ENCODE measurements at regions of chr1 and their contacts with region 1.

Region 1: GRCh38 chr1:6489799-6490180 is 1.7 kb downstream of the PLEKHG5 start:
- DNase-seq: peak; percentile 75
- ATAC-seq: peak; percentile 75
- H3K4me3 Mint-ChIP-seq: peak overlapping the region; percentile 77
- H3K27ac Mint-ChIP-seq: no peak overlapping the region
- H3K4me1 Mint-ChIP-seq: peaks cover 13% of the 10 kb centered on the region
- H3K27me3 Mint-ChIP-seq: peaks cover 9% of the 10 kb centered on the region
- CTCF ChIP-seq: peak; percentile 67

Region 2: GRCh38 chr1:6624710-6625583 is 135.2 kb after region 1 on chr1 and contains the start of gene THAP3:
- CTCF ChIA-PET with region 1: no interaction called
- POLR2A ChIA-PET with region 1: no interaction called
- intact Hi-C with region 1: loop called (anchors 5 kb)
- DNase-seq: peak; percentile 83
- ATAC-seq: peak; percentile 97
- H3K4me3 Mint-ChIP-seq: peak within 1 kb of the TSS; percentile 86
- H3K27ac Mint-ChIP-seq: peak within 1 kb of the TSS; percentile 71
- H3K4me1 Mint-ChIP-seq: peaks cover 32% of the 10 kb centered on the region
- H3K27me3 Mint-ChIP-seq: no peaks in the 10 kb centered on the region
- CTCF ChIP-seq: no peak
- total RNA-seq, gene THAP3: 16.2 and 21.3 TPM in 2 replicates

Region 3: DNA sequence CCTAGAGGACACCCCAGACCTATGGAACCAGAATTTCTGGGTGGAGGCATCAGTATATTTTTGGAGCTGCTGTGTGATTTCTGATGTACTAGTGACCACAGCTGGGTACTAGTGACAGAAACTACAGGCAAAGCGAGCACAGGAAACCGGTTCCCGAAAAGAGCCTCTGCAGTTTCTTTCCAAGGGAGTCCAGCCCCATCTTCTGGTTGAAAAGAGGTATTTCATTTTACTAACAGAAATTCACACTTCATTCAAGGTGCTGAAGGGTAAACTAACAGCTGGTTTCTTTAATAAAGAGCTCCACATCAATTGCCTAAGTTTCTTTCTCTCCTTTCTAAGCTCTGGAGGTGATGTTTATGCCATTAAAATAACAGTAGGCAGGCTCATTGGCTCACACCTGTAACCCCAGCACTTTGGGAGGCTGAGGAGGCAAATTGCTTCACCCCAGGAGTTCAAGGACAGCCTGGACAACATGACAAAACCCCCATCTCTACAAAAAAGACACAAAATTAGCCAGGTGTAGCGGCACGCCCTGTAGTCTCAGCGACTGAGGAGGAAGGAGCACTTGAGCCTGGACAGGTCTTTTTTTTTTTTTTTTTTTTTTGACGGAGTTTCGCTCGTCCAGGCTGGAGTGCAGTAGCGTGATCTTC is 156.8 kb after region 1 on chr1:
- CTCF ChIA-PET with region 1: interaction called, 16 read pairs
- POLR2A ChIA-PET with region 1: no interaction called
- intact Hi-C with region 1: loop called (anchors 1 kb)
- DNase-seq: no peak
- ATAC-seq: peak; percentile 49
- H3K4me3 Mint-ChIP-seq: no peak overlapping the region
- H3K27ac Mint-ChIP-seq: no peak overlapping the region
- H3K4me1 Mint-ChIP-seq: peaks cover 2% of the 10 kb centered on the region
- H3K27me3 Mint-ChIP-seq: no peaks in the 10 kb centered on the region
- CTCF ChIP-seq: peak; percentile 26

Region 4: GRCh38 chr1:6701437-6702153 is 211.8 kb after region 1 on chr1 and contains the start of gene DNAJC11:
- CTCF ChIA-PET with region 1: no interaction called
- POLR2A ChIA-PET with region 1: no interaction called
- intact Hi-C with region 1: loop called (anchors 1 kb)
- DNase-seq: peak; percentile 99
- ATAC-seq: peak; percentile 95
- H3K4me3 Mint-ChIP-seq: peak within 1 kb of the TSS; percentile 92
- H3K27ac Mint-ChIP-seq: peak within 1 kb of the TSS; percentile 88
- H3K4me1 Mint-ChIP-seq: peaks cover 21% of the 10 kb centered on the region
- H3K27me3 Mint-ChIP-seq: no peaks in the 10 kb centered on the region
- CTCF ChIP-seq: peak; percentile 28
- total RNA-seq, gene DNAJC11: 57.0 and 65.6 TPM in 2 replicates

Region 5: GRCh38 chr1:7218210-7218832 is 728.5 kb after region 1 on chr1:
- CTCF ChIA-PET with region 1: no interaction called
- POLR2A ChIA-PET with region 1: no interaction called
- intact Hi-C with region 1: loop called (anchors 5 kb)
- DNase-seq: no peak
- ATAC-seq: no peak
- H3K4me3 Mint-ChIP-seq: no peak overlapping the region
- H3K27ac Mint-ChIP-seq: no peak overlapping the region
- H3K4me1 Mint-ChIP-seq: no peaks in the 10 kb centered on the region
- H3K27me3 Mint-ChIP-seq: peaks cover 5% of the 10 kb centered on the region
- CTCF ChIP-seq: no peak